Endothelial cell of umbilical vein (primary cell): ENCODE measurements at regions of chr11 and their contacts with region 1.

Region 1: GRCh38 chr11:123246749-123247495 is 51.9 kb upstream of the CLMP start:
- DNase-seq: peak; percentile 68
- H3K4me3 ChIP-seq: no peak overlapping the region
- H3K27ac ChIP-seq: no peak overlapping the region
- H3K4me1 ChIP-seq: no peaks in the 10 kb centered on the region
- H3K27me3 ChIP-seq: peaks cover 0 to 4% of the 10 kb centered on the region in 2 experiments
- CTCF ChIP-seq: peak; percentile 96 to 98
- POLR2A ChIP-seq: no peak

Region 2: GRCh38 chr11:122920579-122920978 is 326.3 kb before region 1 on chr11:
- CTCF ChIA-PET with region 1: no interaction called
- POLR2A ChIA-PET with region 1: no interaction called
- dilution Hi-C with region 1: no loop called
- intact Hi-C with region 1: no loop called
- DNase-seq: no peak
- H3K4me3 ChIP-seq: no peak overlapping the region
- H3K27ac ChIP-seq: no peak overlapping the region
- H3K4me1 ChIP-seq: no peaks in the 10 kb centered on the region
- H3K27me3 ChIP-seq: no peaks in the 10 kb centered on the region
- CTCF ChIP-seq: no peak
- POLR2A ChIP-seq: no peak

Region 3: DNA sequence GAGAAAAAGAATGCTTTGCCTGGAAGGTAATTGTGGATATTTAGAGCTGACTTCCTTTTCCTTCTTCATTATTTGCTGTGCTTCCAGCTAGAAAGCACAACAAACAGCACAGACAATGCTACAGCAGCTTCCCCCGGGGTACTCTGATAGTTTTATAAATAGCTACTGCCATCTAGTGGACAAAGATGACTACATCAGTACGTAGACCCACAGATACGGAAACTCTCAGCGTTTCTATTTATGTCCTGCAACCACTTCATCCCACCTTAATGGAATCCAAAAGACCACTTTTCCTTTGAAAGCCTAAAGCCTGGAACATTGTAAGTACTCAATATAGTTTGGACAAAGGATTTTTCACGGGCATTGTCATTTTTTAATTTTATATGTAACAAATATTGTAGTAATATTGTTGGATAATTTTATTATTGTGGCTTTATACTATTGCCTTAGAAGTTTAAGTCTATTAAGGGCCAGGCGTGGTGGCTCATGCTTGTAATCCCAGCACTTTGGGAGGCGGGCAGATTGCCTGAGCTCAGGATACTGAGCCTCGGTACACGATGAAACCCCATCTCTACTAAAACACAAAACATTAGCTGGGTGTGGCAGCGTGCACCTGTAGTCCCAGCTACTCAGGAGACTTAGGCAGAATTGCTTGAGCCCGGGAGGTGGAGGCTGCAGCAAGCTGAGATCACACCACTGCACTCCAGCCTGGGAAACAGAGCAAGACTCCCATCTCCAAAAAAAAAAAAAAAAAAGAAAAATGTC is 192.4 kb before region 1 on chr11:
- CTCF ChIA-PET with region 1: interaction called, 14 read pairs
- POLR2A ChIA-PET with region 1: no interaction called
- dilution Hi-C with region 1: no loop called
- intact Hi-C with region 1: no loop called
- DNase-seq: peak; percentile 68
- H3K4me3 ChIP-seq: no peak overlapping the region
- H3K27ac ChIP-seq: no peak overlapping the region
- H3K4me1 ChIP-seq: peaks cover 13% of the 10 kb centered on the region
- H3K27me3 ChIP-seq: no peaks in the 10 kb centered on the region
- CTCF ChIP-seq: peak; percentile 62 to 65
- POLR2A ChIP-seq: peak; percentile 50

Region 4: DNA sequence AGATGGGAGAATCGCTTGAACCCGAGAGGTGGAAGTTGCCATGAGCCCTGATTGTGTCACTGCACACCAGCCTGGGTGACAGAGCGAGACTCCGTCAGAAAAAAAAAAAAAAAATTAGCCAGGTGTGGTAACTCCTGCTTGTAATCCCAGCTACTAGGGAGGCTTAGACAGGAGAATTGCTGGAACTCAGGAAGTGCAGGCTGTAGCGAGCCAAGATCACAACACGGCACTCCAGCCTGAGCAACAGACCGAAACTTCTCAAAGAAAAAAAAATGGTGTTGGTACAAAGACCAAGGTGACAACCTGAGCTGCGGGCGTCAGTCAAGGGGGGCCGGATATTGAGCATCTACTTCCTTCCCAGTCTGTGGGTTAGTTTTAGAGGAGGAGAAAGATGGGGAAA is 136.6 kb before region 1 on chr11:
- CTCF ChIA-PET with region 1: interaction called, 587 read pairs
- POLR2A ChIA-PET with region 1: interaction called, 4 read pairs
- dilution Hi-C with region 1: loop called (anchors 25 kb)
- intact Hi-C with region 1: loop called (anchors 1 kb)
- DNase-seq: no peak
- H3K4me3 ChIP-seq: no peak overlapping the region
- H3K27ac ChIP-seq: no peak overlapping the region
- H3K4me1 ChIP-seq: no peaks in the 10 kb centered on the region
- H3K27me3 ChIP-seq: no peaks in the 10 kb centered on the region
- CTCF ChIP-seq: no peak
- POLR2A ChIP-seq: no peak

Region 5: DNA sequence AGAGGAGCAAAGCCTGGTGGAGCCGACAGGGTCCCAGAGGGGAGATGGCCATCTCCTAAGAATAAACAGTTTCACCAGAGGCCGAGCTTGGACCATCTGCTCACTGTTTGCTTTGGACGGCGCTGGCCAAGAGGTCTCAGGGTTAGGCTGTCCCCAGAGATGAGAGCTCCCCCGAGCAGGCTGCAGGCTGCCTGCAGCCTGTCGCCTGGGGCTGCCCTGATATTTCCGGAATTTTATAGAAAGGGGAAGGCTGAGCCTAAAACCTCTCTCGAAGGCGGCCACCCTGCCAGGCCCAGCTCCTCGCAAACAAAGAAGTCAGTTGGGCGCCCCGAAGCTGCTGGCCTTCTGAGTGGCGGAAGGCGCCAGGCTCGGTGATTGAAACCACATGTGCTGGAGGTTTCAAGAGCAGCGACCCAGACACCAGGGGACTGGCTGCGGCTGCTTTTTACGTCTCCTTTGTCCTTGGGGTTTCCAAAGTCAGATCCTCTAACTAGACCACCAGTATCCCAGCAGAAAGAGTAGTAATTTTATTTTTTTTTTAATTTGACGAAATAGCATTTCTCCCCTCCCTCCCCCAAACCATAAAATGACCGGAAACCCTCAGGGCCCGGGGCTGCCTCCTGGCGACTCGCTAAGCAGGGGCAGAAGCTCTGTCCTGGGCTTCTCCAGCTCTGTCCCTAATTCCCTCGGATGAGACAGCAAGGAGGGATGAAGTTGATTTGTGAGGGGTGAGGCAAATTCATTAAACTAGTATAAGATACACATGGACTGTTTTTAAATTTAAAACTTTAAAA is 109.3 kb before region 1 on chr11:
- CTCF ChIA-PET with region 1: interaction called, 10 read pairs
- POLR2A ChIA-PET with region 1: no interaction called
- dilution Hi-C with region 1: no loop called
- intact Hi-C with region 1: no loop called
- DNase-seq: peak; percentile 33
- H3K4me3 ChIP-seq: no peak overlapping the region
- H3K27ac ChIP-seq: peak overlapping the region; percentile 36
- H3K4me1 ChIP-seq: peaks cover 9% of the 10 kb centered on the region
- H3K27me3 ChIP-seq: no peaks in the 10 kb centered on the region
- CTCF ChIP-seq: no peak
- POLR2A ChIP-seq: no peak

Region 6: DNA sequence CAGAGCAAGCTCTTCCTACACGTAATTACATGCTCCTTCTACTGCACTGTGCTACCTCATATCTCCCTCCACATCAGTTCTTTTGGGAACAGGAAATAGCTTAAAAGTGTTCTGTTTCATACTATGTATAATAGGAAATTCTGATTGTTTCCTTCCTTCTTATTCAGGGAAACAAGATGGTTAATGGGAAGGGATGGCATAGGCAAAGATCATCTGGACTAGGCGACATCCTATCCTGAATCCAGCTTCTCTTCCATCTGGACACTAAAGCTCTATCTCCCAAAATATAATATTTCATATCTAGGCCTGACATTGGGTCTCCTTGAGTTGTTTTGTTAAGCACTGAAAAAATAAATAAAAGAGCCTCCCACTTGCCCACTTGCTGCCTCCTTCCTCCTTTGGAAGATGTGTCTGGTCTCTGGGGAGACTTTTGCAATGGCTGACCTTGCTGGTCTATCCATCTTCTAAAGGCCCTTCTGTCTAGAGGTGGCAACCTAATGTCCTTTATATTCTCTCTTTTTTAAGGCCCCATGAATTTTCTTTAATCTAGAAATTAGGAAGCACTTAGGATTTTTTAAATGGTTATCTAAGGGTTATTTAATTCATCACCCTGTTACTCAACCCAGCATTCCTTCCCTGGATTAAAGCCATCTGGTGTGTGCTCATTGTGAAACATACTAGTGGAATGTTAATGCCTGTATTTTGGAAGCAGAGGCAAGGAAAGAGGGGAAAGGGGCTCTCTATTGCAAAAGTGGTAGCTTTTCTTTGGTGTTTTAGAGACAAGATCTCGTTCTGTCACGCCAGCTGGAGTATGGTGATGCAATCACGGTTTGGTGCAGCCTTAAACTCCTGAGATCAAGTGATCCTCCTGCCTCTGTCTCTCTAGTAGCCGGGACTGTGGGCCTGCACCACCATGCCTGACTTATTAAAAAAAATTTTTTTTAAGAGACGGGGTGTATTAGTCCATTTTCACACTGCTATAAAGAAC is 72.4 kb before region 1 on chr11:
- CTCF ChIA-PET with region 1: interaction called, 11 read pairs
- POLR2A ChIA-PET with region 1: no interaction called
- dilution Hi-C with region 1: no loop called
- intact Hi-C with region 1: no loop called
- DNase-seq: no peak
- H3K4me3 ChIP-seq: no peak overlapping the region
- H3K27ac ChIP-seq: no peak overlapping the region
- H3K4me1 ChIP-seq: no peaks in the 10 kb centered on the region
- H3K27me3 ChIP-seq: no peaks in the 10 kb centered on the region
- CTCF ChIP-seq: no peak
- POLR2A ChIP-seq: no peak

Region 7: DNA sequence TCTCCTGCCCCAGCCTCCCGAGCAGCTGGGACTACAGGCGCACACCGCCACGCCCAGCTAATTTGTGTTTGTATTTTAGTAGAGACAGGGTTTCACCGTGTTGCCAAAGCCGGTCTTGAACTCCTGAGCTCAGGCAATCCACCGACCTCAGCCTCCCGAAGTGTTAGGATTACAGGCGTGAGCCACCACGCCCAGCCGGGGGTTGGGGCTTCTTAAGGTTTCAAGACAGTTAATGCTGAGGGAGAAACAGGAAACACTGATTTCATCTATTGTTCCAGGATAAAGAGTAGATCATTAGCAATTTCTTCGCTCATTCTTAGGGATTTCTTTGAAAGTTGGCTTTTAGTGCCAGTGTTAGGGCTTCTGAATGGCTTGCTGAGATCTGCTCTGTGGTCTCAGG is 30.7 kb before region 1 on chr11:
- CTCF ChIA-PET with region 1: interaction called, 11 read pairs
- POLR2A ChIA-PET with region 1: no interaction called
- dilution Hi-C with region 1: no loop called
- intact Hi-C with region 1: no loop called
- DNase-seq: no peak
- H3K4me3 ChIP-seq: no peak overlapping the region
- H3K27ac ChIP-seq: no peak overlapping the region
- H3K4me1 ChIP-seq: peaks cover 14% of the 10 kb centered on the region
- H3K27me3 ChIP-seq: no peaks in the 10 kb centered on the region
- CTCF ChIP-seq: no peak
- POLR2A ChIP-seq: no peak

Region 8: GRCh38 chr11:123261345-123262106 is 14.6 kb after region 1 on chr11:
- CTCF ChIA-PET with region 1: interaction called, 61 read pairs
- POLR2A ChIA-PET with region 1: no interaction called
- dilution Hi-C with region 1: no loop called
- intact Hi-C with region 1: no loop called
- DNase-seq: peak; percentile 68
- H3K4me3 ChIP-seq: peak overlapping the region in 1 of 3 experiments; percentile 38
- H3K27ac ChIP-seq: no peak overlapping the region
- H3K4me1 ChIP-seq: no peaks in the 10 kb centered on the region
- H3K27me3 ChIP-seq: peaks cover 4 to 5% of the 10 kb centered on the region in 2 experiments
- CTCF ChIP-seq: peak; percentile 94 to 98
- POLR2A ChIP-seq: no peak

Region 9: DNA sequence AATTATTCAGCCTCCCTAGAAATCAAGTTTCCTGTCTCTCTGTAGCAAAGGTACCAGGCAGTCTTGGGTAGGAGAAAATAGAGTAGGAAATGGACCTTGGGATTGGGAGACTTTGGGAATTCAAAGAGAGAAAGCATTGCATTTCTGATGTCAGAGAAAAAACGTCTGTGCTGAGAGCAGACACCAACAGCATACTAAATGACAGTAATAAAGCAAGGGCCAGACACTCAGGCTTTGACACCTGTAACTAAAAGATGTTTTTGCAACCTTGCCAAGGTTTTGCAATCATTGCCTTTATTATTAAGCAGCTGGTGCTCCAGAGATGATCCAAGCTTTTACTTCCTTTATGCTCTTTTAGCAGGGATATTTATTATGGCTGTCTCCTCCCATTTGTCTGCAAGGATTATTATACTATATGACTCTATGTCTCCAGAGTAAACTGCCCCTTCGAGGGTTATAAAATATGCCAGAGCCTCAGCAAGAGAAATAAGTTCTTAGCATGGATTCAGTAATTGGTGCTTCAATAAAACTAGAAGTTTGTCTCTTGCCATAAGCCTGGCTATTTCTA is 98.0 kb after region 1 on chr11:
- CTCF ChIA-PET with region 1: no interaction called
- POLR2A ChIA-PET with region 1: no interaction called
- dilution Hi-C with region 1: no loop called
- intact Hi-C with region 1: no loop called
- DNase-seq: no peak
- H3K4me3 ChIP-seq: no peak overlapping the region
- H3K27ac ChIP-seq: no peak overlapping the region
- H3K4me1 ChIP-seq: no peaks in the 10 kb centered on the region
- H3K27me3 ChIP-seq: no peaks in the 10 kb centered on the region
- CTCF ChIP-seq: no peak
- POLR2A ChIP-seq: no peak